Psoas muscle (tissue), 8 donors: ENCODE measurements at regions of chr5 and their contacts with region 1.

Region 1: GRCh38 chr5:16539169-16539721 is 73.6 kb upstream of the ZNF622 start:
- DNase-seq: peak; percentile 79 to 93
- ATAC-seq: peak; percentile 89 to 94 (median 93)
- H3K4me3 ChIP-seq: peak overlapping the region; percentile 43
- H3K27ac ChIP-seq: peak overlapping the region; percentile 95
- H3K4me1 ChIP-seq: peaks cover 43% of the 10 kb centered on the region
- H3K27me3 ChIP-seq: no peaks in the 10 kb centered on the region
- CTCF ChIP-seq: no peak

Region 2: DNA sequence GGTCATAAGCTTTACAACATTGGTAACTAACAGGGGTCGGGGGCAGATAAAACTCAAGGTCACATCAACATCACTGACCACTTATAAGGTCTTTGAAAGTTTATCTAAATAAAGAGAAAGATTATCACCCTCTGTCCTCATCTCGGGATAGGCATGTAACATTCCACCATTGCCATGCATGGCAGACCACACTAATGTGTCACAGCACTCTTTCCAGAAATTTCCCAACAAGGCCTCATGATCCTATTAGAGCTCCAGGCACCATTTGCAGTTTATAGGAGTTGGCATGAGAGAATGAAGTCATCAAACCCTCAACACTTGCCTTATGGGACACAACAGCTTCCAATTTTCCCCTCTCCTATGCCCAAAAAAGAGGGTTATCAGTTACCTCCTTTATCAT is 41.7 kb before region 1 on chr5:
- intact Hi-C with region 1: loop called in 1 of 2 experiments (anchors 5 kb)
- DNase-seq: no peak
- ATAC-seq: peak; percentile 35 to 77 (median 58)
- H3K4me3 ChIP-seq: peak overlapping the region; percentile 4
- H3K27ac ChIP-seq: peak overlapping the region; percentile 95
- H3K4me1 ChIP-seq: peaks cover 54% of the 10 kb centered on the region
- H3K27me3 ChIP-seq: no peaks in the 10 kb centered on the region
- CTCF ChIP-seq: no peak

Region 3: GRCh38 chr5:16508730-16509531 is 30.3 kb before region 1 on chr5:
- intact Hi-C with region 1: loop called in 1 of 2 experiments (anchors 2 kb)
- DNase-seq: peak; percentile 66 to 92
- ATAC-seq: peak; percentile 89 to 97 (median 92)
- H3K4me3 ChIP-seq: peak overlapping the region; percentile 68
- H3K27ac ChIP-seq: peak overlapping the region; percentile 95
- H3K4me1 ChIP-seq: peaks cover 8% of the 10 kb centered on the region
- H3K27me3 ChIP-seq: no peaks in the 10 kb centered on the region
- CTCF ChIP-seq: no peak

Region 4: GRCh38 chr5:16585041-16585667 is 45.9 kb after region 1 on chr5:
- intact Hi-C with region 1: no loop called
- DNase-seq: no peak
- ATAC-seq: peak in 2 of 4 donors; percentile 58 to 63
- H3K4me3 ChIP-seq: no peak overlapping the region
- H3K27ac ChIP-seq: no peak overlapping the region
- H3K4me1 ChIP-seq: no peaks in the 10 kb centered on the region
- H3K27me3 ChIP-seq: no peaks in the 10 kb centered on the region
- CTCF ChIP-seq: peak; percentile 34